Activated T-helper 1 cell treated with anti-CD3 and anti-CD28 coated beads, Interleukin-12 subunit alpha, Interleukin-12 subunit beta, Interleukin-2, Interleukin-4 antibody, amounts not matched to agents 30 ng/mL and 10 ng/mL and 1 ng/mL, durations not matched to agents 14 hours and 24 hours and 36 hours (primary cell): ENCODE measurements at regions of chr4 and their contacts with region 1.

Region 1: GRCh38 chr4:149897783-149898182 is 82.1 kb upstream of the IQCM start:
- DNase-seq: no peak
- H3K4me3 Mint-ChIP-seq: no peak overlapping the region
- H3K27ac Mint-ChIP-seq: no peak overlapping the region
- H3K4me1 Mint-ChIP-seq: no peaks in the 10 kb centered on the region
- H3K27me3 Mint-ChIP-seq: peaks cover 2% of the 10 kb centered on the region

Region 2: DNA sequence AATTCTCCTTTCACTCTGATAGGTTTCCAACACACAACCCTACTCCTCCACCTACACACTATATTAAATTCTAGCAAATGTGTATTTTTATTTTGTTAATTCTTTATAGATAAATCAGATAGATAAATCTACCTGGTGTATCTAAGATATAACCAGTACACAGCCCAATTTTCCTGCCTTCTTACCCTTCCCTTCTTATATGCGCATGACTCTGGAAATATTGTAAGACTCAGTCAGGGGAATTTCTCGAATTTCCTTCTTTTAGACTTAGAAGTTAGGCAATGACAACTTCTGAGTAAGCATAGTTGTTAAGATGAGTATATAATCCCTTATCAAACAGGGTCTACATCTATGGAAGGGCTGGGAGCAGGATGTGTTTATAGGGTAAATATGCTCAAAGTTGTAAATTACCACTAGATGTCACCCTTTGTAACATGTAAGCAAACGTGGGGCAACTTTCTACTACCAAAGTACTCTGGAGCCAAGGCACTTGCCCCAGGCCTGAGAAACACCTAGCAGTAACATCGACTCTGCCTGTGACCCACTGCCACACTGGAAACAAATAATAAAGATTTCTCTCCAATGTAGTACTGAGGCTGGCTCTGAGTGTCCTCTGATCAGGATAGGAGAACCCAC is 526.9 kb before region 1 on chr4:
- intact Hi-C with region 1: loop called (anchors 10 kb)
- DNase-seq: no peak
- H3K4me3 Mint-ChIP-seq: no peak overlapping the region
- H3K27ac Mint-ChIP-seq: no peak overlapping the region
- H3K4me1 Mint-ChIP-seq: no peaks in the 10 kb centered on the region
- H3K27me3 Mint-ChIP-seq: no peaks in the 10 kb centered on the region